Kidney (tissue), 22 donors: ENCODE measurements at regions of chr11 and their contacts with region 1.

Region 1: GRCh38 chr11:69699213-69699612 is 4.6 kb downstream of the FGF19 start:
- DNase-seq: peak in 2 of 5 donors; percentile 58 to 60
- H3K4me3 ChIP-seq: no peak overlapping the region
- H3K27ac ChIP-seq: no peak overlapping the region
- H3K4me1 ChIP-seq: peaks cover 0 to 3% (median 0%) of the 10 kb centered on the region in 3 donors
- H3K27me3 ChIP-seq: peaks cover 8% of the 10 kb centered on the region
- CTCF ChIP-seq: no peak

Region 2: DNA sequence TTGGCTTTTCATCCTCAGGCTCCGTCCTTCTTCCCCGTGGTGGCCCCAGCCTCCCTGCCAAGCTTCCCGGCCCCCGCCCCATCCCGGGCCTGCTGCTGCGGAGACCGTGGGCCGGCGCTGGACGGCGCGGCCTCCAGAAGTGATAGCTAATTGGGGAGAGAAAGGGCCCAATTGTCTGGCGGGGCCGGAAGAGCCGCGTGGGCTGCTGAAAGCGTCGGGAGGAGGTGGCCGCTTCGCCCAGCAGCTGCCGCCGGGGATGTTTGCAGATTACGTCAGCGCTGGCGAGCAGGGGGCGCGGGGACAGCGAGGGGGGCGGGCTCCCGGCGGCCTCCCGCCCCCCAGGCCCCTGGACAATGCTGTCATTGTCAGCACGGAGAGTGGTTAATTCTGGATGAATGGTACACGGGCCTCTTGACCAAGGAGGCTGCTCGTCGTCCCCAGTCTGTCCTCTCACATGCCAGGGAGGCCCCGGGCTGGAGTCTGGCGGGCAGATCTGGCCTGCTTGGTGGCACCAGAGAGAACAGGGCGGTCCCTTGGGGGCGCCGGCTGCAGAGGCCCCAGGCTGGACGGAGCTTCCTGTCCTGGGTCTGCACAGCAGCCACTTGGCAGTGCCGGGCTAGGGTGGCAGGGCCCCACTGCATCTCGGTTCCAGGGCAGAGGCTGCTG is 541.9 kb before region 1 on chr11:
- intact Hi-C with region 1: no loop called
- DNase-seq: peak in 4 of 5 donors; percentile 72 to 91 (median 82)
- H3K4me3 ChIP-seq: no peak overlapping the region
- H3K27ac ChIP-seq: no peak overlapping the region
- H3K4me1 ChIP-seq: peaks cover 0 to 2% (median 0%) of the 10 kb centered on the region in 3 donors
- H3K27me3 ChIP-seq: no peaks in the 10 kb centered on the region
- CTCF ChIP-seq: no peak

Region 3: GRCh38 chr11:70191495-70192140 is 492.4 kb after region 1 on chr11:
- intact Hi-C with region 1: loop called (anchors 10 kb)
- DNase-seq: peak; percentile 77 to 91 (median 86)
- H3K4me3 ChIP-seq: no peak overlapping the region
- H3K27ac ChIP-seq: no peak overlapping the region
- H3K4me1 ChIP-seq: peaks cover 0 to 2% (median 0%) of the 10 kb centered on the region in 3 donors
- H3K27me3 ChIP-seq: no peaks in the 10 kb centered on the region
- CTCF ChIP-seq: peak; percentile 83